Mammary epithelial cell (primary cell): ENCODE measurements at regions of chr14 and their contacts with region 1.

Region 1: GRCh38 chr14:88168498-88169165 is 154.4 kb downstream of the KCNK10 start:
- DNase-seq: peak; percentile 17
- H3K4me3 ChIP-seq: no peak overlapping the region
- H3K27ac ChIP-seq: no peak overlapping the region
- H3K4me1 ChIP-seq: no peaks in the 10 kb centered on the region
- H3K27me3 ChIP-seq: no peaks in the 10 kb centered on the region
- CTCF ChIP-seq: peak; percentile 75 to 92

Region 2: GRCh38 chr14:87944987-87945604 is 223.5 kb before region 1 on chr14:
- CTCF ChIA-PET with region 1: interaction called, 9 read pairs
- dilution Hi-C with region 1: no loop called
- in situ Hi-C with region 1: no loop called
- intact Hi-C with region 1: loop called (anchors 1 kb)
- DNase-seq: peak; percentile 23
- H3K4me3 ChIP-seq: no peak overlapping the region
- H3K27ac ChIP-seq: no peak overlapping the region
- H3K4me1 ChIP-seq: no peaks in the 10 kb centered on the region
- H3K27me3 ChIP-seq: no peaks in the 10 kb centered on the region
- CTCF ChIP-seq: peak; percentile 44 to 54